CD8-positive, alpha-beta memory T cell (primary cell): ENCODE measurements at regions of chr2 and their contacts with region 1.

Region 1: DNA sequence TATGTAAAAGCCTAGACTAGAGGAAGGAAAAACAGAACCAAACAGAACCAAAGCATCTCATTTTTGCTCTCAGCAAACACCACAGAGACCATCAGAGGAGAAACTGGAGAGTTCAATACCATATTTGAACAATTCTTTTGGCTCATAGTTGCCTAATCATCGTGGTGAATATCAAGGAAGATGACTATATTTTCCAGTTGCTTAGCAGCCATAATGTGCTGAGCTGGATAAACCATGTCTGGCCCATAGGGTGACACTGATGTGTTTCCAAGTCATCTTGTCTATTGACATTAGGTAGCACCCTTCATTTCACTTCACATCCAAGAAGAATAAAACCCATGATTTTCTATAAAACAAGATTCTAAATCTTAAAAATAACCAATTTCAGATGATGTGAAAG is 5.9 kb upstream of the XRCC5 start:
- DNase-seq: no peak
- H3K4me3 ChIP-seq: no peak overlapping the region
- H3K4me3 Mint-ChIP-seq: no peak overlapping the region
- H3K27ac ChIP-seq: no peak overlapping the region
- H3K27ac Mint-ChIP-seq: no peak overlapping the region
- H3K4me1 ChIP-seq: peaks cover 1% of the 10 kb centered on the region
- H3K4me1 Mint-ChIP-seq: peaks cover 0 to 2% (median 2%) of the 10 kb centered on the region in 3 donors
- H3K27me3 ChIP-seq: no peaks in the 10 kb centered on the region
- H3K27me3 Mint-ChIP-seq: peaks cover 0 to 5% of the 10 kb centered on the region in 2 donors

Region 2: DNA sequence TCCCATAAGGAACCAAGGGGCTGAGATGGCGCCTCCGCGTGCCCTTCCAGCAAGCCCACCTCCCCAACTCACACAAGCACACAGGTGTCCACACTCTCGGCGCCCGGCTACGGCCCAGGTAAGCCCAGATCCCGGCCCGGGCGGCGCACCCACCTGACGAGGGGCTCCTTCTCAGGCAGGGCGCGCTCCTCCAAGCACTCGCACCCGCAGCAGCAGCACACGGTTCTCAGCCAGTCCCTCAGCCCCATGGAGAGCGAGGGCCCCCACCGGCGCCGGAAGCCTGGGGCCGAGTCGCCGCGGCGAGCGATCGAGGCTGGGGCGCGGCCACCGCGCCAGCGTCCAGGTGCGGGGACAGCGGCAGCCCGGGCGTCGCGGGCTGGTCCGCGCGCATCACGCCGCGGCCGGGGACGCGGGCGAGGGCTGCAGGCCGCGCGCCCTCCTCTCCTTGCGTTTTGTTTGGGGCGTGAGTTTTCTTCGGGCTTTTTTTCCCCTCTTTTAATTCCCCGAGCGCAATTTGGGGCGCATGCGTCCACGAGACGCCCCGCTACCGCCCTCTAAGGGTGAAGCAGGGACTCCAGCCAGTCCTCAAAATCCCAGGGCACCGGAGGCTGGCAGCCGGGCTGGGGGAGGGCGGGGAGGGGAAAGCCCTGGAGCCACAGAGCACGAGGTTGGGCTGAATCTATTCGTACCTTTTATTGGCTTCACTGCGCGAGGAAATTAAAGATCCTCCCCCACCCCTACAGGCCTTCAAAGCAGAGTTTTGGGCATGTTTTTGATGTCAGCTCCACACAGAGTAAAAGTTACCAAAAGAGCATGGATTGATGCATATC is 89.9 kb before region 1 on chr2 and contains the start of gene MREG:
- CTCF ChIA-PET with region 1: no interaction called
- POLR2A ChIA-PET with region 1: interaction called, 12 read pairs
- DNase-seq: peak; percentile 77 to 88 (median 79)
- H3K4me3 ChIP-seq: peak within 1 kb of the TSS; percentile 59
- H3K4me3 Mint-ChIP-seq: peak within 1 kb of the TSS; percentile 89 to 97 (median 93)
- H3K27ac ChIP-seq: no peak within 1 kb of the TSS
- H3K27ac Mint-ChIP-seq: peak within 1 kb of the TSS; percentile 26 to 92 (median 84)
- H3K4me1 ChIP-seq: peaks cover 41% of the 10 kb centered on the region
- H3K4me1 Mint-ChIP-seq: peaks cover 48 to 72% (median 70%) of the 10 kb centered on the region in 3 donors
- H3K27me3 ChIP-seq: no peaks in the 10 kb centered on the region
- H3K27me3 Mint-ChIP-seq: no peaks in the 10 kb centered on the region
- total RNA-seq, gene MREG: 25.4 to 26.2 TPM